AG04449 (cell line): ENCODE measurements at regions of chr5 and their contacts with region 1.

Region 1: DNA sequence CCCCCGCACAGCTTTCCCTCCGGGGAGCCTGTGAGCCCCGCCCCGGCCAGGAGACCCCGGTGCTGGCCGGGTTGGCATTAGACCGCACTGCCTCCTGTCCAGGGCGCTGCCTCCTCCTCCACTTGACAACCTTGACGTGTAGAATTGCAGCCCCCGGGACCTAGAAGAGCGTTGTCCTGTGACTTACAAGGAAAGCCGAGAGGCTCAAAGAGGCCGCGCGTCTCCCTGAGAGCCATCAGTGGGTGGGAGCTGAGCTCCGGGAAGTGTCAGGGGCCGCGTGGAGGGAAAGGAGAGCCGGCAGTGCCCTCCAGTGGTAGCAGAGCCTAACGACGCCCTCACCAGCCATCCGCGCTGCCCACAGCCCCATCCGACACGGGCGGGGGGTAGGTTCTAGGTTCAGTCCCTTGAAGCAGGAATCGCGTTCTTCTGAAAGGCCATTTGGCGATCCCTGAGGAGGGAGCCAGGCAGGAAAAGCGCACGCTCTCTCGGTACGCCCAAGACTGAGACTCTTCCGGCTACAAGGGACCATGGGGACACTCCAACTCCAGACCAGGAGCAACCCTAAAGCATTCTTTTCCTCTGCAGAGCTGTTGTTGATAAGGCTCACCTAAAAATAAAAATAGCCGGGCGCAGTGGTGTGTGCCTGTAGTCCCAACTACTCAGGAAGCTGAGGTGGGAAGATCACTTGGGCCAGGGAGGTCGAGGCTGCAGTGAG is 40.6 kb upstream of the SAP30L start:
- DNase-seq: no peak
- H3K4me3 ChIP-seq: peak overlapping the region; percentile 32; the same call in 1 of the 2 replicates
- CTCF ChIP-seq: peak; percentile 98

Region 2: DNA sequence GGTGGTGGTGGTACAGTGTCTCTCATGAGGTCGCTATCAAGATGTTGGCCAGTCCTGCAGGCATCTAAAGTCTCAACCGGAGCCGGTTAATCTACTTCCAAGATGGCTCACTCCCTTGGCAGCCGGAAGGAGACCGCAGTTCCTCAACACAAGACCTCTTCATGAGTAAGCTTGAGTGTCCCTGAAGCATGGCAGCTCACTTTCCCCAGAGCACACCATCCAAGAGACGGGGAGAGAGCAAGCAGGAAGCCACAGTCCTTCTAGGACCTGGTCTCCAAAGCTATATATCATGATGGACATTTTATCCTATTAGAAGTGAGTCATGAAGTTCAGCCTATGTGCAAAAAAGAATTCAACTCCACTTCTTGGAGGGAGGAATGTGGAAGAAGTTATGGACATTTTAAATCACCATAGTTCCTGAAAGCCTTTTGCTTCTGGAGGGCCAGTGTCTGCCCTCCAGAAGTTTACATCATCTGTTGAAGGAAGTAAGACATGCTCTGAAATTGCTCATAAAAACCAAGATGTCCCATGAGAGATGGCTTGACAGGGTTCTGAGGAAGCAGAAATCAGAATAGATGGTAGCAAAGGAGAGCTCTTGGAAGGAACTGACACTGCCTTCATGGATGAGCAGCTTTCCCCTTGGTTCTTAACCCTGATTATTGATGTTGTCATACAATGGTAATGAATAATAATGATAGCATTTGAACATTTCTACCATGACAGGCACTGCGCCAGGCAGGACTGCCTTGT is 193.4 kb before region 1 on chr5:
- CTCF ChIA-PET with region 1: interaction called, 12 read pairs
- POLR2A ChIA-PET with region 1: no interaction called
- DNase-seq: no peak
- H3K4me3 ChIP-seq: no peak overlapping the region
- CTCF ChIP-seq: no peak

Region 3: DNA sequence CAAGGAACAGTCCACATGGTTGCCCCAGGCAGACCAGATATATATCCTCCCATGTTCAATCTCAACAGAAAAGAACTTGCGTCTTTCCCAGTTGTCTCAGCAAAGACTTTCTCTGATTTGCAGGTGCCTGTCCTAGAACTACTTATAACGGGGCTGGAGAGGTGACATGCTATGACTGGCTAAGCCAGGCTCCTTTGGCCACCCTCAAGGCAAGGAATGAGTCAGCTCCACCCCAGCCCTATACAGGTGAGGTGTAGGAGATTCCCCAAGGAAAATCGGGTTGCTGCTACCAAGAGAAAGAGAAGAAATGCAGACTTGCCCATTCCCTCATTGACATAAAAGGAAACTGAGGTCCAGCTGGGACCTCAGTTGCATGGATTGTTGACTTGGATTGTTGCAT is 87.3 kb before region 1 on chr5:
- CTCF ChIA-PET with region 1: no interaction called
- POLR2A ChIA-PET with region 1: no interaction called
- DNase-seq: no peak
- H3K4me3 ChIP-seq: no peak overlapping the region
- CTCF ChIP-seq: no peak

Region 4: GRCh38 chr5:154390096-154390495 is 15.1 kb before region 1 on chr5:
- CTCF ChIA-PET with region 1: interaction called, 15 read pairs
- POLR2A ChIA-PET with region 1: no interaction called
- DNase-seq: no peak
- H3K4me3 ChIP-seq: no peak overlapping the region
- CTCF ChIP-seq: no peak